MCF 10A (cell line): ENCODE measurements at regions of chr1 and their contacts with region 1.

Region 1: GRCh38 chr1:44594871-44595746 is 79.2 kb downstream of the TMEM53 start:
- DNase-seq: peak; percentile 72
- H3K4me3 Mint-ChIP-seq: no peak overlapping the region
- H3K27ac Mint-ChIP-seq: peak overlapping the region; percentile 63
- H3K4me1 Mint-ChIP-seq: peaks cover 19% of the 10 kb centered on the region
- H3K27me3 Mint-ChIP-seq: no peaks in the 10 kb centered on the region
- CTCF ChIP-seq: peak; percentile 99

Region 2: GRCh38 chr1:44213222-44214112 is 381.6 kb before region 1 on chr1 and contains the start of gene DMAP1:
- CTCF ChIA-PET with region 1: interaction called, 92 read pairs
- POLR2A ChIA-PET with region 1: interaction called, 7 read pairs
- intact Hi-C with region 1: loop called (anchors 1 kb)
- DNase-seq: peak; percentile 80
- H3K4me3 Mint-ChIP-seq: peak within 1 kb of the TSS; percentile 82
- H3K27ac Mint-ChIP-seq: peak within 1 kb of the TSS; percentile 80
- H3K4me1 Mint-ChIP-seq: peaks cover 25% of the 10 kb centered on the region
- H3K27me3 Mint-ChIP-seq: no peaks in the 10 kb centered on the region
- CTCF ChIP-seq: no peak
- total RNA-seq, gene DMAP1: 36.6 and 38.5 TPM in 2 replicates

Region 3: DNA sequence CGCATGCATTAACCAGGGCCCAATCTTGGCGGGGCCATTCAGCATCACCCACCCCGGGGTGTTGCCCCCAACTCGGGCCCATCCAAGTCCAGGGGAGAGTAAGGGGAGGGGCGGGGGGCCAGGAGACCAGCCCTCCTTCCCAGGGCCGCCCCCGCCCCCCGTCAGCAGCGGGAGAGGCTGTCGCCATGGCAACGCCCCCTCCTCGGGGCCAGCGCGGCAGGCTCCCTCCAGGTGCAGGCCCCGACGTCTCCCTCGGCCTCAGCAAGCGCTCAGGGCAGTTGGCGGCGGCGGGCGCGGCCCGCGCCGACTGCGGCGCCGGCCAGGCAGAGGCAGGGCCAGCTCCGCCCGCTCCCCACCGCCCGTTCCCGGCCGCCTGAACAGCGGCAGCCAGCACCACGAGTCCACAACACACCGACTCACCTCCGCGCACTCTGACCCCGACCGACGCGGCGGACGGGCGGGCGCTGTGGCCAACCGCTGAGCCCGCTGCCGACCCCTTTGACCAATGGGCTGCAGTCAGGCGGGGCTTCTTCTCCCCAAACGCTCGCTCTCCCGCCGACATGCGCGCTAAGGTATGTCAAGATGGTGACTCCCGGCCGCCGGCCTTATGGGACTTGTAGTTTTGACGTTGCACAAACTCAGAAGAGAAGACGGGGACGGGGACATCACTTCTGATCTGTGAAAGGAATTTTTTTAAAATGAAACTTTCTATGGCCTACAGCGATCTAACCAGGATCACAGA is 240.1 kb before region 1 on chr1 and contains the start of gene ERI3:
- CTCF ChIA-PET with region 1: interaction called, 11 read pairs
- POLR2A ChIA-PET with region 1: interaction called, 3 read pairs
- intact Hi-C with region 1: no loop called
- DNase-seq: peak; percentile 98
- H3K4me3 Mint-ChIP-seq: peak within 1 kb of the TSS; percentile 89
- H3K27ac Mint-ChIP-seq: peak within 1 kb of the TSS; percentile 92
- H3K4me1 Mint-ChIP-seq: peaks cover 34% of the 10 kb centered on the region
- H3K27me3 Mint-ChIP-seq: no peaks in the 10 kb centered on the region
- CTCF ChIP-seq: no peak
- total RNA-seq, gene ERI3: 70.5 and 83.4 TPM in 2 replicates

Region 4: GRCh38 chr1:44377925-44378784 is 217.0 kb before region 1 on chr1:
- CTCF ChIA-PET with region 1: interaction called, 113 read pairs
- POLR2A ChIA-PET with region 1: interaction called, 3 read pairs
- intact Hi-C with region 1: loop called (anchors 1 kb)
- DNase-seq: peak; percentile 72
- H3K4me3 Mint-ChIP-seq: no peak overlapping the region
- H3K27ac Mint-ChIP-seq: no peak overlapping the region
- H3K4me1 Mint-ChIP-seq: no peaks in the 10 kb centered on the region
- H3K27me3 Mint-ChIP-seq: no peaks in the 10 kb centered on the region
- CTCF ChIP-seq: peak; percentile 72

Region 5: GRCh38 chr1:44423591-44424537 is 171.2 kb before region 1 on chr1:
- CTCF ChIA-PET with region 1: interaction called, 15 read pairs
- POLR2A ChIA-PET with region 1: no interaction called
- intact Hi-C with region 1: no loop called
- DNase-seq: peak; percentile 98
- H3K4me3 Mint-ChIP-seq: peak overlapping the region; percentile 73
- H3K27ac Mint-ChIP-seq: peak overlapping the region; percentile 89
- H3K4me1 Mint-ChIP-seq: peaks cover 36% of the 10 kb centered on the region
- H3K27me3 Mint-ChIP-seq: no peaks in the 10 kb centered on the region
- CTCF ChIP-seq: no peak

Region 6: DNA sequence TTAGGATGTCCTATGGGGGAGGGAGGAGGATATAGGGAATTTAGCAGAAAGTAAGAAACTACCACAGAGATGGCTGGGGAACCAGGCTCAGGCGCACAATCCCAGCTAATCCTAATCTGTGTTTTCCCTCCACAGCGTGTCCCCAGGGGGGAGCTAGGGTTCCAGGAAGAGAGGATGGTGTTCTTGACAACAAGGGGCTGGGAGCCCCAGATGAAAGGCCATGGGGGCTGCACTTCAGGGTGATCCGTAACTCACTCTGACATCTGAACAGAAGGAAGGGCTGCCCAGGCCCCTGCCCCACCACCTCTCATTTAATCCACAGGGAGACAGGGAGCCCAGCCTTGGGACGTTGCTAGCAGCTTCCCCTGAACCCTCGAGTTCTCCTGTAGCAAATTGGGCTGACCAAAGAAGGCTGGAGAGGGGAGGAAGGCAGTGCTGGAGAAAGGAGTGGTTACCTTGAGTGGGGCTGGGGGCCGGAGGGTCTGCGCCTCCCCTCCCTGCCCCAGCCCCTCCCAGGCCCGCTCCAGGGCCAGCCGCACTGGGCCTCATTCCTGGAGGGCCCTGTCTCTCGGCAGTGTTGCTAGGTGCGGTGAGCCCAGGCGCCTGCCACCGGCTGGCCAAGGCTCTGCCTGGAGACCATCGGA is 52.6 kb before region 1 on chr1:
- CTCF ChIA-PET with region 1: no interaction called
- POLR2A ChIA-PET with region 1: no interaction called
- intact Hi-C with region 1: no loop called
- DNase-seq: no peak
- H3K4me3 Mint-ChIP-seq: no peak overlapping the region
- H3K27ac Mint-ChIP-seq: no peak overlapping the region
- H3K4me1 Mint-ChIP-seq: peaks cover 30% of the 10 kb centered on the region
- H3K27me3 Mint-ChIP-seq: no peaks in the 10 kb centered on the region
- CTCF ChIP-seq: no peak